Activated T-helper 1 cell treated with anti-CD3 and anti-CD28 coated beads, Interleukin-12 subunit alpha, Interleukin-12 subunit beta, Interleukin-2, Interleukin-4 antibody, amounts not matched to agents 30 ng/mL and 10 ng/mL and 1 ng/mL, durations not matched to agents 14 hours and 24 hours and 36 hours (primary cell): ENCODE measurements at regions of chr17 and their contacts with region 1.

Region 1: DNA sequence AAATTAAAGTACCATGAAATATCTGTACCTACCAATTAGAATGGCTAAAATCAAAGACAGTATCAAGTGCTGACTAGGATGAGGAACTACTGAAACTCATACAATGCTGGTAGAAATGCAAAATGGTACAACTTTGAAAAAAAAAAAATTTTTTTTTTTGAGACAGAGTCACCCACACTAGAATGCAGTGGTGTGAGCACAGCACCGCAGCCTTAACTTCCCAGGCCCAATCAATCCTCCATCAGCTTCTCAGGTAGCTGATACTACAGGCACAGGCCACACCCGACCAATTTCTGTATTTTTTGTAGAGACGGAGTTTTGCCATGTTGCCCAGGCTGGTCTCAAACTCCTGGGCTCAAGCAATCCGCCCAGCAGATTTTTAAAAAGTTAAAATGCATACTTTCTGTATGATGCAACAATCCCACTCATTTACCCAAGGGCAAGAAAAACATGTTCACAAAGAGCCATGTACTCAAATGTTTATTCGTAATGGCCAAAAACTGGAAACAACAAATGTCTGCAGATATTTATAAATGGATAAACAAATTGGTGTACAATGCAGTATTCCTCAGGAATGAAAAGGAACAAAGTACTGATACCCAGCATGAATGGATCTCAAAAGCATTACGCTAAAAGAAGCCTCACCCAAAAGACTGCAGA is 8.7 kb downstream of the SMURF2 start:
- DNase-seq: no peak
- H3K4me3 Mint-ChIP-seq: no peak overlapping the region
- H3K27ac Mint-ChIP-seq: no peak overlapping the region
- H3K4me1 Mint-ChIP-seq: peaks cover 32% of the 10 kb centered on the region
- H3K27me3 Mint-ChIP-seq: no peaks in the 10 kb centered on the region

Region 2: DNA sequence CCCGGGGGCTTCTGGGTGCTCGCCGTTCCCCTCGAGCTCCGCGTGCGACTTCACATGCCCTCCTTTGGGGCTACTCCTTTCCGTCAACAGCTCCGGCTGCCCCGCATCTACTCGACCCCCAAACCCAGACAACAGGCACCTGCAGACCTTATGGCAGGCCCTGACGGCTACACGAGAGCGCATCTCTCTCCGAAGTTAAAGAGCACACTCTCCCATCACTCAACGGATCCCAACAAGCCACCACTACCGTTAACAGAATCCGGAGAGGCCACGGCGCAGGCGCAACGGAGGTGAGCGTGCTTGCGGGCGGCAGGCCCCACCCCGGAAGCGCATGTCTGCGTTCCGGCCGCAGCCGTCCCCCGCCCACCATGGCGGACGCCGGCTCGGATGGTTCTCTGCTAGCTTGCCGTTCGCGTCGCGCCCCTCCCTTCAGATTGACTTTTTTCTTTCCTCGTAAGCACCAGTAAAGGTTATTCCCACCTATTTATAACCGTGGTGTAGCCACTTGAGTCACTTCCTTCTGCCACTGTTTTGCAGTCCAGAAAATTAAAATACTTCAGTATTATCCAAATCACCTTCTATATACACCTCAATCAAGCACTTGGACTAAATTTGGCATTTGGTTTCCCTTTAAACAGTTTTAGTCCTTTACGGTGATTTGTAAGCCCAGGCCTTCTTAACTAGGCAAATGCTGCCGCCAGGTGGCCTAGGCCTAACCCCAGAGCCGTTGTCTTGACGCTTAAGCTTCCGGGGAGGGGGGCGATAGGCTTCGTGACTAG is 156.5 kb before region 1 on chr17 and contains the start of gene POLG2:
- intact Hi-C with region 1: loop called (anchors 1 kb)
- DNase-seq: peak; percentile 94
- H3K4me3 Mint-ChIP-seq: peak within 1 kb of the TSS; percentile 100
- H3K27ac Mint-ChIP-seq: peak within 1 kb of the TSS; percentile 100
- H3K4me1 Mint-ChIP-seq: peaks cover 69% of the 10 kb centered on the region
- H3K27me3 Mint-ChIP-seq: no peaks in the 10 kb centered on the region
- total RNA-seq, gene POLG2: 33.3 and 36.5 TPM in 2 replicates

Region 3: DNA sequence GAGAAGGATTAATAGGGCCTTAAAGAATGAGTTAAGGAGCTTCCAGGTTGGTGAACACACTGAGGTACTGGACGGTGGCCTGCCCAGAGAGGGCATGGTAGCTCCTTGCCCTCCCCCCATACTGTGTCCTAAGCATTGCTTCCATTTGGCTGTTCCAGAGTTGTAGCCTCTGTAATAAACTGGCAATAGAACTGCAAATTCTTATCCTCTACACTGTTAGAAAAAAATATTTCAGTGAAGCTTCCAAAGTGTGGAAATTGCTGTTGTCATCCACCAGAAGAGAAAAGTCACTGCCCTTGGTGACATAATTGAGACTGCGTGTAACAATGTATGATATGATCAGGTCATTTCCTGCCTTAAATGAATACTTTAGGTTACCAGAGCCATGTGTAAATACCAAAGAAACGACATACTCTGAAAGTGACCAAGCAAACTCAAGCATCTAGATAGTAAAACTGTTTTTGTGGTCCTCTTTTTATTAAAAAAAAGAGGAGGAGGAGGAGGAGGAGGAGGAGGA is 80.8 kb before region 1 on chr17:
- intact Hi-C with region 1: loop called (anchors 1 kb)
- DNase-seq: peak; percentile 3
- H3K4me3 Mint-ChIP-seq: peak overlapping the region; percentile 40
- H3K27ac Mint-ChIP-seq: peak overlapping the region; percentile 82
- H3K4me1 Mint-ChIP-seq: peaks cover 17% of the 10 kb centered on the region
- H3K27me3 Mint-ChIP-seq: no peaks in the 10 kb centered on the region